ENCODE measurements at regions of chr15 and their contacts with region 1.

Region 1: GRCh38 chr15:96549136-96549535 is 218.6 kb downstream of the NR2F2 start:
- DNase-seq: no peak
- H3K4me3 ChIP-seq: no peak overlapping the region
- H3K27ac ChIP-seq: no peak overlapping the region
- H3K4me1 ChIP-seq: no peaks in the 10 kb centered on the region
- H3K27me3 ChIP-seq: peaks cover 0 to 11% of the 10 kb centered on the region in 2 donors
- CTCF ChIP-seq: no peak
- POLR2A ChIP-seq: no peak

Region 2: GRCh38 chr15:96367311-96368200 is 181.6 kb before region 1 on chr15:
- intact Hi-C with region 1: no loop called
- DNase-seq: no peak
- H3K4me3 ChIP-seq: peak overlapping the region; percentile 5 to 39 (median 11)
- H3K27ac ChIP-seq: no peak overlapping the region
- H3K4me1 ChIP-seq: no peaks in the 10 kb centered on the region
- H3K27me3 ChIP-seq: peaks cover 0 to 52% of the 10 kb centered on the region in 2 donors
- CTCF ChIP-seq: no peak
- POLR2A ChIP-seq: no peak

Region 3: GRCh38 chr15:96514607-96515285 is 34.4 kb before region 1 on chr15:
- intact Hi-C with region 1: no loop called
- DNase-seq: no peak
- H3K4me3 ChIP-seq: no peak overlapping the region
- H3K27ac ChIP-seq: no peak overlapping the region
- H3K4me1 ChIP-seq: no peaks in the 10 kb centered on the region
- H3K27me3 ChIP-seq: peaks cover 0 to 3% of the 10 kb centered on the region in 2 donors
- CTCF ChIP-seq: no peak
- POLR2A ChIP-seq: no peak

Region 4: DNA sequence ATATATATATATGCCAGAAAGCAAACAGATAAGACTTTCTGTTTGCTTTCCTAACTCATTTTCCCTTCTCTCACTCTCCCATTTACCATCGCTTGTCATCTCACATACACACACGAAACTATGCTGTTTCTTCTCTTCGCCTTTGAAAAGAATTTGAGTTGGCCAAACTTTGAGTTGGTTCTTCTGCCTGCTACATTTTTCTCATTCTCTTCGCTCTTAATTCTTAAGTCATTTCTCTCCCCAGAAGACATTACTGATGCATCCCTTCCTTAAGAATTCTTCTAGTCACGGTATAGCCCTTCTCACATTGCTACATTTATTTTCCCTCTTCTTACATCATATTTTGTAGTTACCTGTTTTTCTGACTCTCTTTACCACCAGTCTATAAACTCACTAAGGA is 901.9 kb after region 1 on chr15:
- intact Hi-C with region 1: loop called (anchors 5 kb)
- DNase-seq: no peak
- H3K4me3 ChIP-seq: no peak overlapping the region
- H3K27ac ChIP-seq: no peak overlapping the region
- H3K4me1 ChIP-seq: no peaks in the 10 kb centered on the region
- H3K27me3 ChIP-seq: no peaks in the 10 kb centered on the region
- CTCF ChIP-seq: no peak
- POLR2A ChIP-seq: no peak

Measured in breast epithelium (tissue), 4 donors.